Esophagus muscularis mucosa (tissue), 4 donors: ENCODE measurements at regions of chr13 and their contacts with region 1.

Region 1: DNA sequence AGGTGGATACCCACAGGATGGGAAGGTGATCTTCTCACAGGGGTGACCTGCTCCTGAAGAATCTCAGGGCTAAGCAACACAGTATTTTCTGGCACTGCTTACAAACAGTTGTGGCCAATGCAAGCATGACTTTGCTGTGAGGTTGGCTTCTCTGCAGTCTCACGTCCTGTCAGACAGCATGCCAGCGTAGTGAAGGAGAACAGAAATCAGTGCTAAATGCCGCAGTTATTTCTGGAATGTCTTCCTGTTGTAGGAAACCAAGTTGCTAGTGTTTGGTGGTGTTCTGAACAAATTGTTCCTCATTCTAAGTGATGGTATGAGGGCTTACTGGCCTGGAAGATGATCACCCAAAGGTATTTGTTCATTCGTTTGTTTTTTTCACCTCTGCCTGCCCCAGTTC is 320.1 kb downstream of the MTUS2 start:
- DNase-seq: no peak
- H3K4me3 ChIP-seq: peak overlapping the region; percentile 9 to 48 (median 22)
- H3K27ac ChIP-seq: peak overlapping the region; percentile 60 to 79 (median 70)
- H3K4me1 ChIP-seq: peaks cover 3 to 14% (median 7%) of the 10 kb centered on the region in 4 donors
- H3K27me3 ChIP-seq: no peaks in the 10 kb centered on the region
- CTCF ChIP-seq: no peak
- EP300 ChIP-seq: peak; percentile 94
- POLR2A ChIP-seq: no peak

Region 2: GRCh38 chr13:29081036-29081435 is 59.2 kb before region 1 on chr13:
- intact Hi-C with region 1: no loop called
- DNase-seq: no peak
- H3K4me3 ChIP-seq: no peak overlapping the region
- H3K27ac ChIP-seq: no peak overlapping the region
- H3K4me1 ChIP-seq: peaks cover 0 to 15% (median 5%) of the 10 kb centered on the region in 4 donors
- H3K27me3 ChIP-seq: no peaks in the 10 kb centered on the region
- CTCF ChIP-seq: no peak
- EP300 ChIP-seq: no peak
- POLR2A ChIP-seq: no peak

Region 3: DNA sequence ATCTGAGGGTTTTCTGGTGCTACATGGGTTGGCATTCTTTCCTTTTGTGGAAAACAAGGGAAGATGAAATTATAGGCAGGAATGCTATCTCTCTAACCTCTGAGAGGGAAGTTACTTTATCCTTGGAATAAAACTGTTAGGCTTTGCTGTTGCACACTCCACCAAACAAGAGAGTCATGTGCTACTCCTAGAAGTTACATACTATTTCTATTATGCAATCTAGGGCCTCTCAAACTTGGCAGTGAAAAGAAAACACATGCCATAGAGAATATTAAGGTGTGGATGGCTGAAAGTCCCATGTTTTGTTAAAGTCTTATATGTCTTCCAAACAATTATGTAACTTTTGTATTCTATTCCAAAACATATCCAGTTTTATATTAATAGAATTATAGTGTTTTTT is 87.3 kb after region 1 on chr13:
- intact Hi-C with region 1: loop called (anchors 5 kb)
- DNase-seq: no peak
- H3K4me3 ChIP-seq: no peak overlapping the region
- H3K27ac ChIP-seq: peak overlapping the region; percentile 71 to 79 (median 76)
- H3K4me1 ChIP-seq: peaks cover 8 to 80% (median 53%) of the 10 kb centered on the region in 4 donors
- H3K27me3 ChIP-seq: no peaks in the 10 kb centered on the region
- CTCF ChIP-seq: no peak
- EP300 ChIP-seq: no peak
- POLR2A ChIP-seq: no peak

Region 4: DNA sequence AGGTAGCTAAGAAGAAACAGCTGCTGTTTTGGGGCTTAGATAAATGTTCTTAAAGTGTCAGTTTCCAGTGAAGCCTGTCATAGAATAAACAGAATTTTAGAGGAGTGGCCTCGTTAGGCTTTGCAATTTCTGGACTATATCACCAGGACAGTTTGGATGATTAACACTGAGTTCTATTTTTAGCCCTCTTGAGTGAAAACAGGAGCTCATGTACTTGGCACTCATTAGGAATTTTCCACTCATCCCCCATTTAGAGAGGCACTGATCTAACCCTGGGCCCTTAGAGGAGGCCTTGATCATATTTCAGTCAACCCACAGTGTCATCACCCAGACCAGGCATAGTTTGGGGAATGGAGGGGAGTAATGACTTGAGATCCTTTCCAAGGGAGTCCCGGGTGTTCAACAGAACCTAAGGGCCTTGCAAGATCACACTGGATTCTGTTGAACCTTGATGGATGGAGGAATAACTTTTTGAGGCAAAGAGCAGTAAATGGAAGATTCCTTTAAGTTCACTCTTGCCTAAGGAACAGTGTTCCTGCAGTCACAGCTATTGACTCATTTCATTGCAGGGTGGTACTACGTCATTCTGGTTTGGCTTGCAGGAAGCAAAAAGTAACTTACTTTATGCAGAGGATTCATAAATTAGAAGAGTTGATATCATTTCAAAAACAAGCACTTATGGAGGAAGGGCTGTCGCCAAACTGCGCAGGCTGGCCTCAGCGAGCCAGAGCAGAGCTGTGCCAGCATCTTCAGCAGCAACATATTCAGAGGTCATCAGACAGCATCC is 295.0 kb after region 1 on chr13:
- intact Hi-C with region 1: loop called (anchors 5 kb)
- DNase-seq: no peak
- H3K4me3 ChIP-seq: no peak overlapping the region
- H3K27ac ChIP-seq: peak overlapping the region; percentile 70 to 84 (median 80)
- H3K4me1 ChIP-seq: peaks cover 37 to 81% (median 77%) of the 10 kb centered on the region in 4 donors
- H3K27me3 ChIP-seq: no peaks in the 10 kb centered on the region
- CTCF ChIP-seq: no peak
- EP300 ChIP-seq: peak; percentile 39
- POLR2A ChIP-seq: no peak